Panc1 (cell line): ENCODE measurements at regions of chr2 and their contacts with region 1.

Region 1: DNA sequence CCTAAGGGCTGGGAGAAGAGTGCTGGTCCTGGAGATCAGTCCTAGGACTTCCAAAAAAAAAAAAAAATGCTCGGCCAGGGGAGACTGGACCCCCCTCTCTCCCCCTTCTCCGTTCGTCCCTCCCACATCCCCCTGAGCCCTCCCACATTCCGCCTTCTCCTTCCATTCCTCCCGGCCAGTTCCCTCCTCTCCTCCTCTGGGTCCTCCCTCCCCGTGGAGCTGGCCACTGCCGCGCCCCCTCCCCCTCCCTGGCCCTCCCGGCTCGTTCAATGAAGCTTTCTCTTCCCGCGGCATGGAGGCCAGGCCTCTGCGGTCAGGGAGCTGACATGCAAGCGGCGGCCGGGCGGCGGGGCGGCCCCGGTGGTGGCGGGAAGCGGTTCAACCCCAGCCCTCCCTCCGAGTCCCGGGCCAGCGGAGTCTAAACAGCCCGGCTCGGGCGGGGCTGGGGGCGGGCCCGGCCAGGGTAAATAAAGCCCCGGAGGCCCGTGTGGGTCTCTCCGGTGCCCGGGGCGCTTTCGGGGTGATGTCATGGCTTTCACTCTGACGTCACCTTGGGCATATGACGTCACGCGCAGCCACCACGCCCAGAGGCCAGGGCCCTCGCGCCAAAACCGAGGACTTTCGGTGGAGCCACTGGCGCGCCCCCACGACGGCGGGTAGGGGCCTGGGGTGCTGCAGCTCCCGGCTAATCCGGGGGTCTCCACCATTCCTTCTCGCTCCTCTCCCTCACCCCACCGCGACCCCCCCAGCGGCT is at the start of gene LOXL3:
- DNase-seq: no peak
- ATAC-seq: peak; percentile 73
- H3K4me3 ChIP-seq: peak within 1 kb of the TSS; percentile 61 to 83
- H3K27ac ChIP-seq: no peak within 1 kb of the TSS
- H3K4me1 ChIP-seq: peaks cover 17% of the 10 kb centered on the region
- H3K27me3 ChIP-seq: no peaks in the 10 kb centered on the region
- CTCF ChIP-seq: no peak
- total RNA-seq, gene LOXL3: 1.0 TPM

Region 2: DNA sequence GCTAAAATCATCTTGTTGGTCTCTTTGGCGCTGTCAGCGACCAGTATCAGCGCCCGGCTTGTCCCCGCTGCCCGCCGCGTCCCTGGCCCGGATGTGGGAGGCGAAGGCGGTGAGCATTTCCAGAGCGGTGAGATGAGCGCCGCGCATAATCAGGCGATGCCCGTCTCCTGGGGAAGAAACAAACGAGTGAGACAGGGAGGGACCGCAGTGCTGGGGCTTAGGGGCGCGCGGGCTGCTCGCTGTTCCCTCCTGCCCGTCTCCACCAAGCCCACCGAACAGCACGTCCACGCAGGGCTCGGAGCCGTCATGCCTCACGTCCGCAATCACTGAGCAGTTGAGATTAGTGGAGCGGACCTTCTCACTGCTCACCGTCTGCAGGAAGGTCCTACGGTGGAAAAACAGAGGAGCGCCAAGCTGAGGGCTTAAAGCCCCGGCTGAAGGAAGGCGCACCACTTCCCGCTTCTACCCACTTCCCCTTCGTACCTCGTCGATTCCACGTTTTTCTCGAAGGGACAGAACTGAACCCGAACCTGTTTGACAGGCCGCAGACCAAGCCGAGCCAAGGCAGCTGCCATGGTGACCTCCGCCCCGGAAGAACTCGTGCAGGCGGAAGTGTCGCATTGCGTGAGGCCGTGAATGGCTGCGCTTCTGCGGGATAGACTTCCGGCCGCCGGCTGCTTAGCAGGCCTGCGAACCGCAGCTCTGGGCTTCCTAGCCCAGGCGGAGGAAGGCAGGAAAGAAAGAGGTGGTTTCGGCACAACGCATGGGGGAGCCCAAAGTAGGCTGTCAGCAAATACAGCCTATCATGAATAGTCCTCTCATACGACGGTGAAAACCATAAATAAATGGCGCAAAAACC is 81.8 kb before region 1 on chr2 and contains the start of gene MRPL53:
- CTCF ChIA-PET with region 1: no interaction called
- POLR2A ChIA-PET with region 1: interaction called, 14 read pairs
- in situ Hi-C with region 1: no loop called
- intact Hi-C with region 1: no loop called
- DNase-seq: peak; percentile 80
- ATAC-seq: peak; percentile 95
- H3K4me3 ChIP-seq: peak within 1 kb of the TSS; percentile 70 to 86
- H3K27ac ChIP-seq: peak within 1 kb of the TSS; percentile 95
- H3K4me1 ChIP-seq: peaks cover under 1% of the 10 kb centered on the region; the same call in 1 of the 2 replicates
- H3K27me3 ChIP-seq: no peaks in the 10 kb centered on the region
- CTCF ChIP-seq: no peak
- total RNA-seq, gene MRPL53: 98.1 TPM

Region 3: GRCh38 chr2:74507145-74507925 is 46.7 kb before region 1 on chr2 and contains the start of gene PCGF1:
- CTCF ChIA-PET with region 1: interaction called, 11 read pairs
- POLR2A ChIA-PET with region 1: interaction called, 3 read pairs
- in situ Hi-C with region 1: no loop called
- intact Hi-C with region 1: no loop called
- DNase-seq: peak; percentile 95
- ATAC-seq: peak; percentile 84
- H3K4me3 ChIP-seq: peak within 1 kb of the TSS; percentile 86 to 94
- H3K27ac ChIP-seq: peak within 1 kb of the TSS; percentile 98
- H3K4me1 ChIP-seq: peaks cover 25% of the 10 kb centered on the region
- H3K27me3 ChIP-seq: no peaks in the 10 kb centered on the region
- CTCF ChIP-seq: peak; percentile 80; the same call in 1 of the 2 replicates
- total RNA-seq, gene PCGF1: 36.8 TPM

Region 4: DNA sequence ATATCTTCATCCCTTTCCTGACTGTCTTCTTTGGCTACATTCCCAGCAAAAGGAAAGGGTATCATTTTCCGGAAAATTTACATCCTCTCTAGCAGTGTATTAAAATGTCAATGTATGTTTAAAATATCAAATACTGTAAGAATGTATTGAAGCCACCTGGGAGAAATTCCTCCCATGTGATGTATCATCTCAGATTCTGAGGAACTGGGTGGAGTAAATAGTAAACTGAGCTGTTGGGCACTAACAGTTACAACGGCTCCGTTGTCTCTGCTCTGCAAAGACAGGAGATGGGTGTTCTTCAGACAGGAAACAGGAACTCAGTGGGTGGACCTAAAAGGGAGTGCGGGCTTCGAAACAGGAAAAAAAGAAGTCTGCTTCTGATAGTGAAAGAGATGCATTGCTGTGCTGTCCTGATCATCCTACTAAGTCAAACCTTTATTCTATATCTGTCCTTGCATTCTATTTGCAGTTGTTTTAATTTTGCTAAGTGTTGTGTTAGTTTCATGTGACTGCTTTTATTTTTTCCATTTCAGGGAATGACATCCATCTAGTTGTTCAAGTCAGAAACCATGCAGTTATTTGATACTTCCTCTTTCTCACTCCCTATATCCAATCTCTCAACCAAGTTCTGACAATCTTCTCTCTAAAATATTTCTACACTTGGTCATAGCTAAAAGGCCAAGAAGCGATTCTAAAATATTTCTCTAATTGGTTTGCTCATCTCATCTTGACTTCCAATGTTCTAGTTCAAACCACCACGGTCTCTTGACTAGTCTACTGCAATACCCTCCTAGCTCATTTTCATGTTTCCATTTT is 19.9 kb after region 1 on chr2:
- CTCF ChIA-PET with region 1: interaction called, 14 read pairs
- POLR2A ChIA-PET with region 1: no interaction called
- in situ Hi-C with region 1: no loop called
- intact Hi-C with region 1: no loop called
- DNase-seq: no peak
- ATAC-seq: peak; percentile 45; the same call in 1 of the 2 replicates
- H3K4me3 ChIP-seq: no peak overlapping the region
- H3K27ac ChIP-seq: no peak overlapping the region
- H3K4me1 ChIP-seq: no peaks in the 10 kb centered on the region
- H3K27me3 ChIP-seq: no peaks in the 10 kb centered on the region
- CTCF ChIP-seq: no peak

Region 5: DNA sequence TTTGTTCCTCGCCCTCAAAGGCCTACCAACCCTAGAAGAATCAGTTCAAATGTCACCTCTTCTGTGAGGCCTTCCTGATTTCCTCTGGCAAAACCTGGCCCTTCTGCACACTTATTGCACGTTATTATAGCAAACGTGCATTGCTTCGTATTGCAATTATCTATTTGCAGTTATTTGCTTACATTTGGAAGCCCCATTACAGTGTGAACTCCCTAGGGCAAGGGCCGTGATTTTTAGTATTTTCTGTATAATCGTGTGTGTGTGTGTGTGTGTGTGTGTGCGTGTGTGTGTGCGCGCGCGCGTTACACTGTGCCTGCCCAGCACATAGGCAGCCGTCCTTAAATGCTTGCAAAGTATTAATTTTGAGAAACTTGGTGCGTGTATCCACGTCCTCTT is 99.5 kb after region 1 on chr2:
- CTCF ChIA-PET with region 1: no interaction called
- POLR2A ChIA-PET with region 1: no interaction called
- in situ Hi-C with region 1: no loop called
- intact Hi-C with region 1: no loop called
- DNase-seq: no peak
- ATAC-seq: peak; percentile 44
- H3K4me3 ChIP-seq: peak overlapping the region; percentile 61 to 77
- H3K27ac ChIP-seq: no peak overlapping the region
- H3K4me1 ChIP-seq: 0 out of 2 replicates have a peak, but pooled peaks cover 5% of the 10 kb centered on the region
- H3K27me3 ChIP-seq: no peaks in the 10 kb centered on the region
- CTCF ChIP-seq: no peak

Region 6: DNA sequence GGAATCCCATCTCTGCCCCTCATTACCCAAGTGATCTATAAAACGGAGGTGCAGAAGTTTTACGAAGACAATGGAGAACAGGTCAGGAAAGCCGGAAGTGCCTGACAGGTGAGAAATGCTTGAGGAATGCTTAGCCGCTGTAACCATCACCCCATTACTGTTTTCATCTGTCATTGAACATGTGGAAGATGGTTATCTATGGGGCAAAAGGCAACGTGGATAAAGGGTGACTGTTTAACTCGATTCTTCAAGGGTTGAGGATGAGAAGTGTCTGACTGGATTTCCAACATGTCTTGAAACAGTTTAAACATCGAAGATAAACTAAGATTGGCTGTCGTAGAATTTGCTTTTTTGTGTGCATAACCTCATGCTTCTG is 297.1 kb after region 1 on chr2:
- CTCF ChIA-PET with region 1: no interaction called
- POLR2A ChIA-PET with region 1: no interaction called
- in situ Hi-C with region 1: no loop called
- intact Hi-C with region 1: no loop called
- DNase-seq: no peak
- ATAC-seq: no peak
- H3K4me3 ChIP-seq: no peak overlapping the region
- H3K27ac ChIP-seq: no peak overlapping the region
- H3K4me1 ChIP-seq: no peaks in the 10 kb centered on the region
- H3K27me3 ChIP-seq: no peaks in the 10 kb centered on the region
- CTCF ChIP-seq: no peak